Heart right ventricle (tissue), 16 donors: ENCODE measurements at regions of chr18 and their contacts with region 1.

Region 1: GRCh38 chr18:24112874-24113615 is 25.8 kb upstream of the CABYR start:
- DNase-seq: no peak
- ATAC-seq: peak in 1 of 8 donors; percentile 11
- H3K4me3 ChIP-seq: no peak overlapping the region
- H3K27ac ChIP-seq: no peak overlapping the region
- H3K4me1 ChIP-seq: peaks cover 0 to 7% (median 0%) of the 10 kb centered on the region in 9 donors
- H3K27me3 ChIP-seq: no peaks in the 10 kb centered on the region
- CTCF ChIP-seq: no peak

Region 2: DNA sequence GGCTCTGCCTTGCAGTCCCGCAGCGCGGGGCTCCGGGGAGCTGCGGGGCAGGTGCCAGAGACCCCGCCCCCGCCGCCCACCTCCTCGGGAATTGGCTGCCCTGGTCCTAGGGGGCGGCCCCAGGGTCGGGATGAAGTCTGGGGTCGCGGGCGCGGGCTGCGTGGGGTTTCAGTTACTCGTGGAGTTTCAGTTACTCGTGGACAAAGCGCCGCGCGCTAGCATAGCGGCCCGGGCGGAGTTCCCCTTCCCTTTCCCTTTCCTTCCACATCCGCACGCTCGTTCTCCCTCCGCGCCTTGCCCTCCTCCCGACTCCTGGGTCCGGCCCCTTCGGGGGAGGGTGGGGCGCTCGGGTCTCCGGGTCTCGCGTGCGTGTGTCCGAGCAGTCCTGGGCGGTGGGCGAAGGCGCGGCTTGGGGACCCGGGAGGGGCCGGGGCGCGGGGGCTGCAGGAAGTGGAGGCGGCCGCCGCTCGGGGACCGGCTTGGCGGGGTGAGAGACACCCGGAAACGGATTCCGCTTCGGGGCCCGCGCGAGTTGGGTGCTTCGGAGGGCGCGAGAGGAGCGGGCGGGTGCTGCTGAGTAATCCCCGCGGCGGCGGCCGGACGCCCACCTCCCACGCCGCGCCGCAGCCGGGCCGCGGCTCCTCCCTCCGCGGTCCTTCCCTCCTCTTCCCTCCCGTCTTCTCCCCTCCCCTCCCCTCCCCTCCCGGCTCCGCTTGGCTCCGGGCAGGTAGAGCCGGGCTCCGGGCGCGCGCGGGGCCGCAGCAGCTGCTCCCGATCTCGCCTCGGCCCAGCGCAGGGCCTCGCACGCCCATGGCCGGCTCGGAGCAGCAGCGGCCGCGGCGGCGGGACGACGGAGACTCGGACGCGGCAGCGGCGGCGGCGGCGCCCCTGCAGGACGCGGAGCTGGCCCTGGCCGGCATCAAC is 98.7 kb before region 1 on chr18 and contains the start of gene TTC39C:
- intact Hi-C with region 1: loop called in 2 of 10 experiments (anchors 5 to 10 kb)
- DNase-seq: peak; percentile 66 to 69
- ATAC-seq: peak; percentile 72 to 90 (median 84)
- H3K4me3 ChIP-seq: peak within 1 kb of the TSS; percentile 57 to 95 (median 86)
- H3K27ac ChIP-seq: peak within 1 kb of the TSS; percentile 35 to 94 (median 80)
- H3K4me1 ChIP-seq: peaks cover 0 to 81% (median 10%) of the 10 kb centered on the region in 9 donors
- H3K27me3 ChIP-seq: no peaks in the 10 kb centered on the region
- CTCF ChIP-seq: no peak
- total RNA-seq, gene TTC39C: 3.5 to 8.1 (median 5.2) TPM

Region 3: DNA sequence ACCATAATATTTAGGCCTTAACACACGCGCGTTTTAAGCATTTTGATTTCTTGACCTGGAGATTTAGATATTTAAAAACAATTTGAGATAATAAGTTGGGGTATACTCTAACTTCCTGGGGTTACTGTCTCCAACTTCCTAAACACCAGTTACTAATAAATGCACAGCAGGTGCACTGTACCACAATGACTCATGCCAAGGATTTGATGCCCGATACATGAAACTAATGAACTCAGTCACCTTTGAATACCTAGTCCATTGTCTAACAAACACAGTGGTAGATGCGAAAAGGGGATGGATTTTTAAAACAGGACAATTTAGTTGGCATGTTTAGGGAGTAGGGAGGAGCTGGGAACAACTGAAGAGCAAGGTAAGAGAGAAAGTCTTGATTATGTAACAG is 47.0 kb after region 1 on chr18:
- intact Hi-C with region 1: no loop called
- DNase-seq: no peak
- ATAC-seq: no peak
- H3K4me3 ChIP-seq: no peak overlapping the region
- H3K27ac ChIP-seq: no peak overlapping the region
- H3K4me1 ChIP-seq: no peaks in the 10 kb centered on the region
- H3K27me3 ChIP-seq: no peaks in the 10 kb centered on the region
- CTCF ChIP-seq: no peak